Activated T-helper 2 cell treated with anti-CD3 and anti-CD28 coated beads, Interferon-gamma antibody, Interleukin-2, Interleukin-4, amounts not matched to agents 10 μg/mL and 5 μg/mL and 100 μg/mL, durations not matched to agents 14 hours and 24 hours and 36 hours (primary cell): ENCODE measurements at regions of chr2 and their contacts with region 1.

Region 1: GRCh38 chr2:28958689-28959088 is 22.4 kb upstream of the TOGARAM2 start:
- DNase-seq: peak; percentile 20
- H3K4me3 Mint-ChIP-seq: no peak overlapping the region
- H3K27ac Mint-ChIP-seq: no peak overlapping the region
- H3K4me1 Mint-ChIP-seq: peaks cover 13% of the 10 kb centered on the region
- H3K27me3 Mint-ChIP-seq: peaks cover 18% of the 10 kb centered on the region

Region 2: GRCh38 chr2:29014811-29015421 is 56.2 kb after region 1 on chr2:
- intact Hi-C with region 1: loop called (anchors 2 kb)
- DNase-seq: peak; percentile 64
- H3K4me3 Mint-ChIP-seq: peak overlapping the region; percentile 83
- H3K27ac Mint-ChIP-seq: peak overlapping the region; percentile 99
- H3K4me1 Mint-ChIP-seq: peaks cover 62% of the 10 kb centered on the region
- H3K27me3 Mint-ChIP-seq: no peaks in the 10 kb centered on the region

Region 3: GRCh38 chr2:29066271-29066860 is 107.7 kb after region 1 on chr2:
- intact Hi-C with region 1: loop called (anchors 5 kb)
- DNase-seq: no peak
- H3K4me3 Mint-ChIP-seq: no peak overlapping the region
- H3K27ac Mint-ChIP-seq: no peak overlapping the region
- H3K4me1 Mint-ChIP-seq: no peaks in the 10 kb centered on the region
- H3K27me3 Mint-ChIP-seq: no peaks in the 10 kb centered on the region

Region 4: DNA sequence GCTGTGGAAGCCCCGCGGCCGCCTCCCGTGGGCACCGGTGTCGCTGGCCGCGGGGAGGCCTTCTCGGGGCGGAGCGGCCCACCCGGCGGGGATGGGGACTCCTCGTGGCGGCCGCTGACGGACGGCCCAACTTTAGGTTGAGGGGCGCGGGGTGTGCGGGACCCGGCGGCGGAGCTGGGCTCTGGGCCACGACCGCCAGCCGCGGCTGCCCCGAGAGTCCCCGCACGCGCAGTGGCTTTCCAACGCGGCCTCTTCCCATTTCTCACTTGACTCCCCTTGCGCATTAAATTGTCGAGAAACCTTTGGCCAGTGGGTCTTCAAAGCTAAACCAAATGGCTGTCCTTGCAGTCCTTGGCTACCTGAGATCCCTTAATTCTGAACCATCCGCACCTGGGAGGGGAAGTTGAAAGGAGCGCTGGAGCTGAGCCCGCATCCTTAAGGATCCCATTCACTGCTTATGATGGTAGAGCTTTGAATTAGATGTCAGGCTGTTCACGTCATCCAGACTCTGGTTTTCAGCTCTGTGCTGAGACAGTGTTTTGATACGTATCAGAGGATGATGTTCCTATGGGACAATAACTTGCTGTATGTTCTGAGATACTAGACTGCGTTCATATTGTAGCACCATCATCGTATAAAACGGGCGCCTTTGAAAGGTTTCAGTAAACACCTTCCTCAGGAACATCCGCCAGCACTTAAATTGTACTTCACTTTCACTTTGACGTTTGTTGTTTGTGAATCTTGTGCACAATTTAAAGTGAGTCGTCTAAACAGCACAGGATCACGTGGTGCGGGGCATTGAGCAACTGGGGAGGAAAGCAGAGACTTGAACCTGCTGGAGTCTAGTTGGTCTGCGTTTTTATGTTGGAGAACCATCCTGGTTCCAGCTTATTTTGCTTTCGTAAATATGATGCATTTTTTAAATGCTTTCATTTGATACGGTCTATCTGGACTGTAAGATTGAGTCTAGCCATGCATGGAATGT is 157.4 kb after region 1 on chr2:
- intact Hi-C with region 1: loop called (anchors 5 kb)
- DNase-seq: peak; percentile 74
- H3K4me3 Mint-ChIP-seq: peak overlapping the region; percentile 80
- H3K27ac Mint-ChIP-seq: peak overlapping the region; percentile 93
- H3K4me1 Mint-ChIP-seq: peaks cover 51% of the 10 kb centered on the region
- H3K27me3 Mint-ChIP-seq: peaks cover 4% of the 10 kb centered on the region

Region 5: GRCh38 chr2:29196792-29197788 is 238.4 kb after region 1 on chr2:
- intact Hi-C with region 1: loop called (anchors 1 kb)
- DNase-seq: peak; percentile 62
- H3K4me3 Mint-ChIP-seq: no peak overlapping the region
- H3K27ac Mint-ChIP-seq: no peak overlapping the region
- H3K4me1 Mint-ChIP-seq: no peaks in the 10 kb centered on the region
- H3K27me3 Mint-ChIP-seq: no peaks in the 10 kb centered on the region

Region 6: DNA sequence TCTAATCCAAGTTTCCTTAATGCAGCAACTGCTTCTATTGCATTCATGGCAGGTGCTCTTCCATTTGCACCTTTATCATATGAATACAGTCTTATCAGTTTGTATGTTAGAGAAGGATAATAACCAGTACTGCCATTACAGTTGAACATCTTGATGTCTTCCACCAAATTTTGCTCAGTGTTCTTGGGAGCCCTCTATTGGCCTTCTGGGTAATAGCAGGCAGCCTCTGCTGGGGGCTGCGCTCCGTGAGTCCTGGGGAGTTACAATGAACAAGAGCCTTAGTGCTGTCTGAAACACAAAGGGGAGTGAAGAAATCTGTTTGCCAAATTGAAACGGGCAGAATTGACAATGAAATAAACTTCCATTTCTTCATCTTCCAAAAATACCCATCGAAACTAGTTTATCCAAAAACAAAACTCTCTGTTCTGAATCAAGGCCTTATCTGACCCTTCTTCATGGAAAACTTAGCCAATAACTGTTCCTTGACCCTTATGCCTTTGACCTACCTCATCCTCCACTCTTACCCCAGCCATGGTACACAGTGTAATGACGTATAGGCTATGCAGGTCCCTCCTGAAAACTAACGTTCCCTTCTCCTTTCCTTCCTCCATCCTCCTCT is 882.8 kb after region 1 on chr2:
- intact Hi-C with region 1: loop called (anchors 5 kb)
- DNase-seq: no peak
- H3K4me3 Mint-ChIP-seq: no peak overlapping the region
- H3K27ac Mint-ChIP-seq: no peak overlapping the region
- H3K4me1 Mint-ChIP-seq: no peaks in the 10 kb centered on the region
- H3K27me3 Mint-ChIP-seq: no peaks in the 10 kb centered on the region